Endothelial cell of umbilical vein (primary cell): ENCODE measurements at regions of chr5 and their contacts with region 1.

Region 1: DNA sequence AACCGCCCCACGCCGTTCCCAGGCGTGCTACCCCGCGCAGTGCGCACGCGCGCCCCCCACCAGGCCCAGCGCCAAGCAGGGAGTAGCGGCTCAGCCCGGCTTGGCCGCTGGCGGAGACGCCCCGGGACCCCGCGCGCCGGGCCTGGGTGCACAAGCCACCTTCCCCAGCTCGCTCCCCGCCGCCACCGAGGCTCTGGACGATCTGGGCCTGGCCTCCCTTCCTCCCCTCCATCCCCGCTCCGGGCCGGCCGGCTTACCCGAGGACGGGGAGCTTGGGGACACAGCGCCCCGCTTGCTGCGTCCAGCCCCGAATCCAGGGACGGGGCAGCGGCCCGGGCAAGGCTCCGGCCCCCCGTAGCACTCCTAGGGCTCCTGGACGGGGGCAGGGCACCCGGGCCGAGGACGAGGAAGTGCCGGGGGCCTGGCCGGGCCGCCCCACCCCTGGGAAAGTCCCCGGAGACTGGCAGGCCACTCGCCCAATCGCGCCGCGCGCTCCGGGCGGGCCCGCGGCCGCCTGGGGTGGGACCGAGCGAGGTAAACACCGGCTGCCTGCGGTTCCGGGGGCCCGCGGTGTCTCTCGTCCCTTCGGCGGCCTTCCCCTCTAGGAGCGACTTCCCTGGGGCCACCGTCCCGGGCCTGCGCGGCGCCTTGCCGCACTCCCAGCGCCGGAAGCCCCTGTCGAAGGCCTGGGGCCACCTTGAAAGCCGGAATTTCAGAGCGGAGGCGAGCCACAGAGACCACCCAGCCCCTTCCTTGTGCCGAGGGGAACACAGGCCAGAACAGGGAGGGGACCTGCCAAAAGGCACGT is at the start of gene TNIP1:
- DNase-seq: peak; percentile 92
- H3K4me3 ChIP-seq: peak within 1 kb of the TSS; percentile 51 to 77 (median 62)
- H3K27ac ChIP-seq: peak within 1 kb of the TSS; percentile 94
- H3K4me1 ChIP-seq: peaks cover 37% of the 10 kb centered on the region
- H3K27me3 ChIP-seq: no peaks in the 10 kb centered on the region
- CTCF ChIP-seq: no peak
- POLR2A ChIP-seq: peak; percentile 57
- total RNA-seq, gene TNIP1: 87.0 and 96.8 TPM in 2 replicates

Region 2: GRCh38 chr5:150758531-150759333 is 322.1 kb before region 1 on chr5 and contains the start of gene DCTN4:
- CTCF ChIA-PET with region 1: no interaction called
- POLR2A ChIA-PET with region 1: no interaction called
- dilution Hi-C with region 1: no loop called
- intact Hi-C with region 1: loop called (anchors 2 kb)
- DNase-seq: peak; percentile 99
- H3K4me3 ChIP-seq: peak within 1 kb of the TSS; percentile 62 to 80 (median 62)
- H3K27ac ChIP-seq: peak within 1 kb of the TSS; percentile 76
- H3K4me1 ChIP-seq: peaks cover 13% of the 10 kb centered on the region
- H3K27me3 ChIP-seq: peaks cover 0 to 5% of the 10 kb centered on the region in 2 experiments
- CTCF ChIP-seq: no peak
- POLR2A ChIP-seq: peak; percentile 84
- total RNA-seq, gene DCTN4: 42.8 and 47.3 TPM in 2 replicates

Region 3: DNA sequence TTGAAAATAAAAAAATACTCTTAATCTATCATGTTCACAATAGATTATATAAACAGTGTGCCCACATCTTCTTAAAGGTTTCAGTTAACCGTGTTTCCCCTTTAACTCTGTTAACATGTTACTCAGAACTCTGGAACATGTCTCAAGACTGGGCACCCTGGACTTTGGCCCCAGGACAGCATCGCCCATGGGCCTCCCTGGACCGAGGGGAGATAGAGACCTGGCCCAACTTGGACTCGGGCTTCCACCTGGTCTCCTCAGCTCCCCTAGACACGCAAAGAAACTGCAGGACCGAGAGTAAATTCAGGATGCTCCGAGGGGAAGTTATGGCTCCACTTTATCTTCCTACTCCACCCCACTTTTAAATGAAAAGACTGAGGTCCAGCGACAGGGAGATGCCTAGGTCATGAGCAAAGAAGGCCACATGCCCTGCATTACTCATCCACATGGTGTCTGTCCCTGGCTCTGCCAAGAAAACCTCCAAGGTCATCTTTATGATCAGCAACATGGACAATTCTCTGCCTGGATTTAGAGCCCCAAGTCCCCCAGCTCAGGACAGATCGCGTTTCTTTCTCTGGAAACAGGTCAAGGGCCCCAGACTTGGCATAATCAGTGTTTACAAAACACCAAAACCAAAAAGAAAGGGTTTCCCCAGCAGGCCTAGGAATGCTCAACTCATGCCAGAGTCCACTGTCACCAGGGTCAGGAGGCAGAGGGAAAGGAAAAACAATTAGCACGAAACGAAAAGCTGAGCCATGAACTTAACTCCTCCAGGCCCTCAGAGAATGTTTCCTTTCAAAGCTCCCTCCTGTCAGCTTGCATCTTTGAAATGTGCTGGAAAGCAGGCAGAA is 43.0 kb before region 1 on chr5:
- CTCF ChIA-PET with region 1: no interaction called
- POLR2A ChIA-PET with region 1: no interaction called
- dilution Hi-C with region 1: loop called (anchors 10 kb)
- intact Hi-C with region 1: no loop called
- DNase-seq: peak; percentile 86
- H3K4me3 ChIP-seq: no peak overlapping the region
- H3K27ac ChIP-seq: peak overlapping the region; percentile 36
- H3K4me1 ChIP-seq: peaks cover 21% of the 10 kb centered on the region
- H3K27me3 ChIP-seq: no peaks in the 10 kb centered on the region
- CTCF ChIP-seq: no peak
- POLR2A ChIP-seq: no peak

Region 4: GRCh38 chr5:151063142-151063949 is 17.5 kb before region 1 on chr5:
- CTCF ChIA-PET with region 1: interaction called, 4 read pairs
- POLR2A ChIA-PET with region 1: no interaction called
- dilution Hi-C with region 1: no loop called
- intact Hi-C with region 1: loop called (anchors 1 kb)
- DNase-seq: peak; percentile 83
- H3K4me3 ChIP-seq: no peak overlapping the region
- H3K27ac ChIP-seq: peak overlapping the region; percentile 86
- H3K4me1 ChIP-seq: peaks cover 27% of the 10 kb centered on the region
- H3K27me3 ChIP-seq: no peaks in the 10 kb centered on the region
- CTCF ChIP-seq: no peak
- POLR2A ChIP-seq: no peak

Region 5: GRCh38 chr5:151093476-151093889 is 12.7 kb after region 1 on chr5:
- CTCF ChIA-PET with region 1: interaction called, 16 read pairs
- POLR2A ChIA-PET with region 1: interaction called, 4 read pairs
- dilution Hi-C with region 1: no loop called
- intact Hi-C with region 1: loop called (anchors 1 kb)
- DNase-seq: no peak
- H3K4me3 ChIP-seq: no peak overlapping the region
- H3K27ac ChIP-seq: peak overlapping the region; percentile 67
- H3K4me1 ChIP-seq: peaks cover 52% of the 10 kb centered on the region
- H3K27me3 ChIP-seq: no peaks in the 10 kb centered on the region
- CTCF ChIP-seq: no peak
- POLR2A ChIP-seq: no peak

Region 6: GRCh38 chr5:151196556-151197290 is 115.9 kb after region 1 on chr5:
- CTCF ChIA-PET with region 1: no interaction called
- POLR2A ChIA-PET with region 1: no interaction called
- dilution Hi-C with region 1: no loop called
- intact Hi-C with region 1: no loop called
- DNase-seq: no peak
- H3K4me3 ChIP-seq: no peak overlapping the region
- H3K27ac ChIP-seq: no peak overlapping the region
- H3K4me1 ChIP-seq: no peaks in the 10 kb centered on the region
- H3K27me3 ChIP-seq: no peaks in the 10 kb centered on the region
- CTCF ChIP-seq: no peak
- POLR2A ChIP-seq: no peak